ENCODE measurements at regions of chr1 and their contacts with region 1.

Region 1: GRCh38 chr1:44924835-44925513 is 61.4 kb downstream of the EIF2B3 start:
- DNase-seq: peak in 1 of 2 experiments; percentile 19
- H3K4me3 ChIP-seq: no peak overlapping the region
- H3K4me3 Mint-ChIP-seq: no peak overlapping the region
- H3K27ac Mint-ChIP-seq: no peak overlapping the region
- H3K4me1 ChIP-seq: no peaks in the 10 kb centered on the region
- H3K4me1 Mint-ChIP-seq: no peaks in the 10 kb centered on the region
- H3K27me3 ChIP-seq: no peaks in the 10 kb centered on the region
- H3K27me3 Mint-ChIP-seq: no peaks in the 10 kb centered on the region
- CTCF ChIP-seq: peak in 1 of 2 experiments; percentile 29

Region 2: DNA sequence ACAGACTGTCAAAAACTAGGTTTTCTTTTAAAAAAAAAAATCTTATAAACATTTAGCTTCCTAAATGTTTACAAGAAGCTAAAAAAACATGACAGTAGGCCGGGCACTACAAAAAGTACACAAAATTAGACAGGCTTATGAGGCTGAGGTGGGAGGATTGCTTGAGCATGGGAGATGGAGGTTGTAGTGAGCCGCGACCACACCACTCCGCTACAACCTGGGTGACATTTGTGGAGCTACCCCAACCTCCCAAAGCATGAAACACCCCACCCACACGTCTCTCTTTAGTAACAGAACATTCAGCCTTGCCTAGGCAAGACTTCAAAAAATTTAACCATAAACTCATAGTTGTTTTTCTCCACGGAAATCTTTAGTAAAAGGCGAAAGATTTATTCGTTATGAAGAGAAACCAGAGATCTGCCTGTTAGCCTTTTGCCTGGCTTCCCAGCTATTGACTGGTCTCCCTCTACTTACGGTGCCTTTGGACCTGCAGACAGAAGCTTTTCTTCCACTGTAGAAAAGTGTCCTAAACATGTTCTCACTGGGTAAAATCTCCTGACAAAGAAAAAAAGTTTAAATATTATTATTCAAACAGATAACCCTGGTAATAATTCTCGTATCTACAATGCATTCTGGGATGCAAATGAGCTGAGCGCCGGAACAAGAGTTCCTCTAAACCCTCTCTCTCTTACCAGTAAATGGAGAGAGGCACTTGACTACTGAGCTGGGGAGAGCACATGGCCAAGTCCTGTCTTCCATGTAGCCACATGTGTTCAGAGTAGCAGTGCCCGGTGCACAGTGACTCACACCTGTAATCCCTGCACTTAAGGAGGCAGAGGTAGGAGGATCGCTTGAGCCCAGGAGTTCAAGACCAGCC is 203.3 kb before region 1 on chr1:
- CTCF ChIA-PET with region 1: no interaction called
- POLR2A ChIA-PET with region 1: interaction called, 10 read pairs
- intact Hi-C with region 1: no loop called
- DNase-seq: peak; percentile 70 to 87
- H3K4me3 ChIP-seq: no peak overlapping the region
- H3K4me3 Mint-ChIP-seq: no peak overlapping the region
- H3K27ac Mint-ChIP-seq: peak overlapping the region; percentile 80
- H3K4me1 ChIP-seq: no peaks in the 10 kb centered on the region
- H3K4me1 Mint-ChIP-seq: peaks cover 3% of the 10 kb centered on the region
- H3K27me3 ChIP-seq: no peaks in the 10 kb centered on the region
- H3K27me3 Mint-ChIP-seq: no peaks in the 10 kb centered on the region
- CTCF ChIP-seq: no peak

Region 3: GRCh38 chr1:44739361-44740178 is 185.4 kb before region 1 on chr1 and contains the start of gene KIF2C:
- CTCF ChIA-PET with region 1: no interaction called
- POLR2A ChIA-PET with region 1: interaction called, 13 read pairs
- intact Hi-C with region 1: no loop called
- DNase-seq: peak; percentile 95
- H3K4me3 ChIP-seq: peak within 1 kb of the TSS; percentile 65
- H3K4me3 Mint-ChIP-seq: peak within 1 kb of the TSS; percentile 99
- H3K27ac Mint-ChIP-seq: peak within 1 kb of the TSS; percentile 97
- H3K4me1 ChIP-seq: no peaks in the 10 kb centered on the region
- H3K4me1 Mint-ChIP-seq: no peaks in the 10 kb centered on the region
- H3K27me3 ChIP-seq: no peaks in the 10 kb centered on the region
- H3K27me3 Mint-ChIP-seq: no peaks in the 10 kb centered on the region
- CTCF ChIP-seq: no peak
- total RNA-seq, gene KIF2C: 61.0 and 63.2 TPM in 2 replicates

Region 4: GRCh38 chr1:44867801-44868200 is 57.2 kb before region 1 on chr1:
- CTCF ChIA-PET with region 1: no interaction called
- POLR2A ChIA-PET with region 1: no interaction called
- intact Hi-C with region 1: no loop called
- DNase-seq: no peak
- H3K4me3 ChIP-seq: no peak overlapping the region
- H3K4me3 Mint-ChIP-seq: no peak overlapping the region
- H3K27ac Mint-ChIP-seq: no peak overlapping the region
- H3K4me1 ChIP-seq: no peaks in the 10 kb centered on the region
- H3K4me1 Mint-ChIP-seq: no peaks in the 10 kb centered on the region
- H3K27me3 ChIP-seq: no peaks in the 10 kb centered on the region
- H3K27me3 Mint-ChIP-seq: no peaks in the 10 kb centered on the region
- CTCF ChIP-seq: no peak

Region 5: DNA sequence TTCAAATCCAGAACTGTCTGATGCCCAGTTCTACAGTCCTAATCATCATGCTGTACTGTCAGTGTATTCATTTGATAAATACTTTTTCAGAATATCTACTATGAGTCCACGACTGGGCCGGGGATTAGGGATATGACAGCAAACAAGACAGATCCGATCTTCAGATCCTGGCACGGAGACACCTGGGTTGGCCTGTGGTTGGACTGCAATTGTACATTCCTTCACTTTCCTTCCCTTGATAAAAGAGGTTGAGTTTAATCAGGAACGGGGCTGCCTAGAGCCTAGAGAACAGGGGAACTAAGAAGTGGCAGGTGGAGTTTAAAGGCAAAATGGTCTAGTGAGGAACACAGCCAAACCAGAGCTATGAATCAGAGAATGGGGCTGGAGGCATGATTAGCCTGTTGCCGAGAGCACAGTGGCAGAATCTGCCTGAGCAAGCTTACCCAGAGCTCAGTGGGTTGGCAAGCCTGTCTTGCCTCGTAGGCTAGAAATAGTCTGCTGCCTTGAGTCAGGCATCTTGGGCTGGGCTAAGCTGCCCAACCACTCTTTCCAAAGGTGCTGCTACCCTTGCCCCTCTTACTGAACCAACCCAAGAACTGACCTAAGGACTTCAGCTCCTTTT is 43.9 kb before region 1 on chr1:
- CTCF ChIA-PET with region 1: no interaction called
- POLR2A ChIA-PET with region 1: no interaction called
- intact Hi-C with region 1: no loop called
- DNase-seq: no peak
- H3K4me3 ChIP-seq: no peak overlapping the region
- H3K4me3 Mint-ChIP-seq: no peak overlapping the region
- H3K27ac Mint-ChIP-seq: no peak overlapping the region
- H3K4me1 ChIP-seq: no peaks in the 10 kb centered on the region
- H3K4me1 Mint-ChIP-seq: no peaks in the 10 kb centered on the region
- H3K27me3 ChIP-seq: no peaks in the 10 kb centered on the region
- H3K27me3 Mint-ChIP-seq: no peaks in the 10 kb centered on the region
- CTCF ChIP-seq: no peak

Measured in Caco-2 (cell line).